Sigmoid colon (tissue), 7 donors: ENCODE measurements at regions of chr20 and their contacts with region 1.

Region 1: DNA sequence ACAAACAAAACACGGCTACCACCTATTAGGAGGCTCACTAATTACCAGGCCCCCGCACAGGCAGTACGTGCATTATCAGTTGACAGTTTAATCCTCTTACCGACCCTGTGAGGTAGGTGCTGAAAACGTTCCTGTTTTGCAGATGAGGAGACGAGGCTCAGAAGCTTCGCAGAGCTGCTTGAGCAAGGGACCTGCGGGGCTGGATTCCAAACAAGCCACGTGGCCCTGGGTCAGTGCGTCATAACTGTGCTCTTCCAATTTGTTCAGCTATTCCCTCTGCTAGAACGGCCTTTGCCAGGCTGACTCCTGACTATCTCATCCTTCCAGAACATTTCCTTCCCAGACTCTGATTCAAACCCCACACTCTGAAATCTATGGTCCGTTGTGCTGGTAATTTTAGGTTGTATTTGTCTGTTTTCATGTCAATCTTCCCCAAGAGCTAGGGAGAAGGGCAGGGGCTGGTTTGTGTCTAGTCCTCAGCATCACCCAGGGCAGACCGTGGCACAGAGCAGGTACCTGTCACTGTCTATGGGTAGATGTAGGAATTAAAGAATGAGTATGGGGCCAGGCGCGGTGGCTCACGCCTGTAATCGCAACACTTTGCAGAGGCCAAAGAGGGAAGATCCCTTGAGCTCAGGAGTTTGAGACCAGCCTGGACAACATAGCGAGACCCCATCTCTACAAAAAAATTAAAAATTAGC is 28.8 kb upstream of the TLDC2 start:
- DNase-seq: peak; percentile 98
- H3K4me3 ChIP-seq: no peak overlapping the region
- H3K27ac ChIP-seq: peak overlapping the region; percentile 94 to 99 (median 97)
- H3K4me1 ChIP-seq: peaks cover 0 to 87% (median 82%) of the 10 kb centered on the region in 4 donors
- H3K27me3 ChIP-seq: no peaks in the 10 kb centered on the region
- CTCF ChIP-seq: no peak
- EP300 ChIP-seq: peak; percentile 67 to 97 (median 79)
- POLR2A ChIP-seq: peak; percentile 11 to 24

Region 2: DNA sequence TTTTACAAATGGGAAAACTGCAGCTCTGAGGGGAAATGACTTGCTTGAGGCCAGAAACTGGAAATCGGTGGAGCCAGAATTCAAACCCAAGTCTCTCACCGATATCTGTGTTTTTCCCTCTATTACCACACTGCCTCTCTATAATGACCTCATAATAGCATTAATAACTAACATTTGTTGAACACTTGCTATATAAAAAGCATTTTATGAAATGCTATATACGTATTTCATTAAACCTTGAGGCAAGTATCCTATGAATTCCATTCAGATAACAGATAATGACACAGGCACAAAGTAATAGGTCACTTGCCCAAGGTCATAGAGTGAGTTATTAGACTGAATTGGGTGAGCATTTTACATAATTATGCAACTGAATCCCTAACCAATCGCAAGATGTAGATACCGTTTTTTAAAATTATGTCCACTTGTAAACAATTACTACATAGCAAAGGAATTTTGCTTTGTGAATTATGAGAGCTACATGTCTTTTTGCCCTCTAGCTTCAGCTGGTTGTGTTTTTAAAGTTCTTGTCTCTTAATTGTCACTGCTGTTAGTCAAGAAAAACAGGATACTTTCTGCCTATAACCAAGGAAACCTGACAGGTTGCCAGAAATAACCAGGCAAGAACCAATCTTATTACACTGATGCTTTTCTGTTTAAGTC is 78.3 kb before region 1 on chr20:
- intact Hi-C with region 1: no loop called
- DNase-seq: no peak
- H3K4me3 ChIP-seq: no peak overlapping the region
- H3K27ac ChIP-seq: no peak overlapping the region
- H3K4me1 ChIP-seq: peaks cover 0 to 10% (median 9%) of the 10 kb centered on the region in 4 donors
- H3K27me3 ChIP-seq: no peaks in the 10 kb centered on the region
- CTCF ChIP-seq: no peak
- EP300 ChIP-seq: no peak
- POLR2A ChIP-seq: no peak

Region 3: DNA sequence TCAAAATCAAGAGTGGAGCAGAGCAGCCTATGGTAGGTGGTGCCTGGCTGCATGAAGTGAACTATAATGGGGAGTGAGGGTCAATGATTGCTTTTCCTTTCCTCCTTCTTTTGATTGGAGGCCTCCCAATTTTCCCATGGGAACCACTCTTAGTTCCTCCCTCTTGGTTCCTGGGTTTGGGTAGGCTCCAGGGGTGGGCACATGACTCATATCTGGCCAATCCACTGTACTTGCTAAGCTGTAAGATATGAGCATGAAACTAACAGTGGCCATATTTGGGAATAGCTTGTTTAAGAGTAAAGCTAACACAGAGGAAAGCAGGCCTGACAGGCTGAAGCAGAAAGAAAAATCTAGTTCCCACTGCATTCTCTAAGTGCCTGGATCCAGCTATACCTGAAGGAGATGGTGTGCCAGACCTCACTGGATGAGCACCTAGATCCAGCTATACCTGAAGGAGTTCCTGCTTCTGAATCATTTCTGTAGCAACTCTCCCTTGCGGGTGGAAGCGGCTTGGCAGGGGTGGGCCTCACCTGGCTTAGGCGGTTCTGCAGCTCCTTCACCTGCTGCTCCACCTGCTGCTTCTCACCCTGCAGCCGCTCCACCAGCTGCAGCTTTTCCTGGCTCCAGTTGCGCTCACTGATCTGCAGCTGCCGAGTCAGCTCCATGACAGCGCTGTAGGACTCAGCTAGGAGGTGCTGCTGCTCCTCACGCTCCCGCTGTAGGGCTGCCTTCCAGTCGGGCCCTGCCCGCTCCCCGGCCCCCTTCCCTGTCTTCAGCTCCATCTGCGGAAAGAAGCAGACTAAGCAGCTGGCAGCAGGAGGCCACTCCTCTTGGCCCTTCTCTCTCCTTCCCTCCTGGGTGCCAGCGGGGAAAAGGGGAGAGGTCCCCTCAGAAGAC is 44.6 kb before region 1 on chr20:
- intact Hi-C with region 1: no loop called
- DNase-seq: no peak
- H3K4me3 ChIP-seq: no peak overlapping the region
- H3K27ac ChIP-seq: peak overlapping the region in 1 of 4 donors; percentile 64
- H3K4me1 ChIP-seq: peaks cover 0 to 5% (median 0%) of the 10 kb centered on the region in 4 donors
- H3K27me3 ChIP-seq: no peaks in the 10 kb centered on the region
- CTCF ChIP-seq: no peak
- EP300 ChIP-seq: no peak
- POLR2A ChIP-seq: no peak

Region 4: GRCh38 chr20:36835453-36836198 is 11.5 kb before region 1 on chr20:
- intact Hi-C with region 1: loop called (anchors 2 kb)
- DNase-seq: peak; percentile 98
- H3K4me3 ChIP-seq: peak overlapping the region in 3 of 4 donors; percentile 12 to 26 (median 21)
- H3K27ac ChIP-seq: peak overlapping the region; percentile 78 to 86 (median 86)
- H3K4me1 ChIP-seq: peaks cover 2 to 67% (median 64%) of the 10 kb centered on the region in 4 donors
- H3K27me3 ChIP-seq: no peaks in the 10 kb centered on the region
- CTCF ChIP-seq: no peak
- EP300 ChIP-seq: no peak
- POLR2A ChIP-seq: peak; percentile 41 to 64